ENCODE measurements at regions of chr3 and their contacts with region 1.

Region 1: GRCh38 chr3:105868742-105869530 is at the start of gene CBLB:
- DNase-seq: peak; percentile 87 to 91 (median 89)
- H3K4me3 ChIP-seq: peak within 1 kb of the TSS; percentile 93
- H3K4me3 Mint-ChIP-seq: peak within 1 kb of the TSS; percentile 95 to 100 (median 99)
- H3K27ac ChIP-seq: peak within 1 kb of the TSS; percentile 84
- H3K27ac Mint-ChIP-seq: peak within 1 kb of the TSS; percentile 87 to 100 (median 99)
- H3K4me1 ChIP-seq: peaks cover 44% of the 10 kb centered on the region
- H3K4me1 Mint-ChIP-seq: peaks cover 35 to 61% (median 47%) of the 10 kb centered on the region in 4 donors
- H3K27me3 ChIP-seq: no peaks in the 10 kb centered on the region
- H3K27me3 Mint-ChIP-seq: no peaks in the 10 kb centered on the region
- total RNA-seq, gene CBLB: 93.5 to 106 TPM

Region 2: GRCh38 chr3:105369500-105370371 is 499.2 kb before region 1 on chr3:
- CTCF ChIA-PET with region 1: no interaction called
- POLR2A ChIA-PET with region 1: interaction called, 6 read pairs
- intact Hi-C with region 1: loop called (anchors 1 kb)
- DNase-seq: peak; percentile 60 to 68 (median 63)
- H3K4me3 ChIP-seq: peak overlapping the region; percentile 67 to 80
- H3K4me3 Mint-ChIP-seq: peak overlapping the region; percentile 91 to 97 (median 96)
- H3K27ac ChIP-seq: peak overlapping the region; percentile 83
- H3K27ac Mint-ChIP-seq: peak overlapping the region; percentile 97 to 99 (median 99)
- H3K4me1 ChIP-seq: peaks cover 21% of the 10 kb centered on the region
- H3K4me1 Mint-ChIP-seq: peaks cover 13 to 45% (median 26%) of the 10 kb centered on the region in 4 donors
- H3K27me3 ChIP-seq: no peaks in the 10 kb centered on the region
- H3K27me3 Mint-ChIP-seq: peaks cover 2 to 14% of the 10 kb centered on the region in 2 donors

Region 3: DNA sequence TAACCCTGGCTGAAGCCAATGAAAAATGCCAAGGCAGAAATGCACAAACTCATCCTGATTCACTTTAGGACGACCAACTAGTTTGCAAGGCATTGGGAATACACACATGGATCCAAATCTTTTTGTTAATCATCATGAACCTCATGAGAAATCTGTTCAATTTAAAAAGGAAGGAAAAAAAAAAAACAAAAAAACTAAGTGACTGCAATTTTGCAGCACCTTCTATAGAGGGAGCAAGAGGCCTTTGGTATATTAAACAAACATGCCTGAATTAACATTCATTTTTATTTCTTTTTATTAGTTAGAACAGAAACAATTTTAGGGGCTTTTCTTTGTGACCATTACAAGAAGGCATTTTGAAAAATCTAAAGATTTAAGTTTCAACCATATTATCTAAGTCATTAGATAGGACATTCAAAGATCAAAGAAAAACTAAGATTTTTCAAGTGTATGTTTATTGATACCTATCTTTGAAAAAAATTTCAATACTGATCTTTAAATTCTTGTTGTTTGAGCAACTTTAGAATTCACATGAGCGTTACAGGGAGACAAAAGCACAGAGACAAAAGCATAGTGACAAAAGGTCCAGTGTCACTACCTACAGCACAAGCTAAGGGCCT is 182.5 kb before region 1 on chr3:
- CTCF ChIA-PET with region 1: no interaction called
- POLR2A ChIA-PET with region 1: interaction called, 3 read pairs
- intact Hi-C with region 1: loop called (anchors 2 kb)
- DNase-seq: peak in 4 of 5 donors; percentile 51 to 56 (median 52)
- H3K4me3 ChIP-seq: no peak overlapping the region
- H3K4me3 Mint-ChIP-seq: no peak overlapping the region
- H3K27ac ChIP-seq: no peak overlapping the region
- H3K27ac Mint-ChIP-seq: peak overlapping the region in 4 of 7 donors; percentile 31 to 79 (median 61)
- H3K4me1 ChIP-seq: peaks cover 18% of the 10 kb centered on the region
- H3K4me1 Mint-ChIP-seq: peaks cover 21 to 28% (median 23%) of the 10 kb centered on the region in 4 donors
- H3K27me3 ChIP-seq: no peaks in the 10 kb centered on the region
- H3K27me3 Mint-ChIP-seq: no peaks in the 10 kb centered on the region

Region 4: DNA sequence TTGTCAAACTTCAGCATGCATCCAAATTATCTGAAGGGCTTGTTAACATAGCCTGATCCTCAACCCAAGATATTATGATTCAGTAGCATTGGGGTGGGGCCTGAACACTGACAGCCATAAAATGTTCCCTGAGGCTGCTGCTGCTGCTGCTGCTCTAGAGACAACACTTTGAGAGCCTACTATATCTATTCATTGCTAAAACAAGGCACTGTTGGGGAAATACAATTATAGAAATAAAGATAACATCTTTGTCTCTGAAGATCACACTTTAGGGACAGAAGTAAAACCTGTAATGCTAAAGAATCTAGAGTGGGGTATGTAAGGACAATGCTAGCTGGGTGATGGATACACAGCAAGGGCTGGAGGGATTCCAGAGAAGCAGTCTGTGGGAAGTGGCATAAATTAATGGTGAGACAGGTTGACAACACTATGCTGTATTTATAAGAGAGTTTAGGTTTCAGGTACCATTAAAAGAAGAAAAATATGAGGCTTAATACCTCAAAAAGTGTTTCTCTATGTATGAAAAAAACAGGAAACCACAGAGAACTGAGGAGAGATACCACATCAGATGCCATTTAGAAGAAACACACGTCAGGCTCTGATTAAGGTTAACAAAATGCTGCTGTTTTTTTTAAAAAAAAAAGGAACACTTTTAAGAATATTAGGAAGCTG is 116.1 kb before region 1 on chr3:
- CTCF ChIA-PET with region 1: interaction called, 3 read pairs
- POLR2A ChIA-PET with region 1: interaction called, 16 read pairs
- intact Hi-C with region 1: loop called (anchors 1 kb)
- DNase-seq: peak; percentile 76 to 87 (median 82)
- H3K4me3 ChIP-seq: peak overlapping the region in 1 of 2 donors; percentile 28
- H3K4me3 Mint-ChIP-seq: peak overlapping the region; percentile 64 to 83 (median 76)
- H3K27ac ChIP-seq: peak overlapping the region; percentile 43
- H3K27ac Mint-ChIP-seq: peak overlapping the region; percentile 89 to 99 (median 96)
- H3K4me1 ChIP-seq: peaks cover 95% of the 10 kb centered on the region
- H3K4me1 Mint-ChIP-seq: peaks cover 52 to 88% (median 66%) of the 10 kb centered on the region in 4 donors
- H3K27me3 ChIP-seq: no peaks in the 10 kb centered on the region
- H3K27me3 Mint-ChIP-seq: no peaks in the 10 kb centered on the region

Region 5: DNA sequence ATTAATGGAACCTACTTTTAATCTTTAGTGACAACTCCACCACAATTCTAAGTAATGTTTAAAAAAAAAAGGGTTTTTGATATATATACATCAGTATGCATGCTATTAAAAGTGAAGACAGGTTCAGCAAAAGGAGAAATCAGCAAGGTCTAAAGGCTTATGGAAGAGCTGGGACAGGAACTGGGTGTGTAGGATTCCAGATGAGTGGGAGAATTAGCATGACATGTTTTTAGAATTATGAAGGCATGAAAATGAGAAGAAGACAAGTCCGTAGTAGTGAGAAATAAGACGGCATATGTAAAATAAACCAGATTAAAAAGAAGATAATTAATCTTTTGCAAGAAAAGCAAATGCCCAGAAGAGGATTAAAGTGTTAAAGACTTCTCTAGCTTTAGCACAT is 52.1 kb before region 1 on chr3:
- CTCF ChIA-PET with region 1: no interaction called
- POLR2A ChIA-PET with region 1: no interaction called
- intact Hi-C with region 1: no loop called
- DNase-seq: no peak
- H3K4me3 ChIP-seq: no peak overlapping the region
- H3K4me3 Mint-ChIP-seq: no peak overlapping the region
- H3K27ac ChIP-seq: no peak overlapping the region
- H3K27ac Mint-ChIP-seq: peak overlapping the region in 1 of 7 donors; percentile 33
- H3K4me1 ChIP-seq: no peaks in the 10 kb centered on the region
- H3K4me1 Mint-ChIP-seq: peaks cover 37 to 65% (median 47%) of the 10 kb centered on the region in 4 donors
- H3K27me3 ChIP-seq: no peaks in the 10 kb centered on the region
- H3K27me3 Mint-ChIP-seq: no peaks in the 10 kb centered on the region

Region 6: DNA sequence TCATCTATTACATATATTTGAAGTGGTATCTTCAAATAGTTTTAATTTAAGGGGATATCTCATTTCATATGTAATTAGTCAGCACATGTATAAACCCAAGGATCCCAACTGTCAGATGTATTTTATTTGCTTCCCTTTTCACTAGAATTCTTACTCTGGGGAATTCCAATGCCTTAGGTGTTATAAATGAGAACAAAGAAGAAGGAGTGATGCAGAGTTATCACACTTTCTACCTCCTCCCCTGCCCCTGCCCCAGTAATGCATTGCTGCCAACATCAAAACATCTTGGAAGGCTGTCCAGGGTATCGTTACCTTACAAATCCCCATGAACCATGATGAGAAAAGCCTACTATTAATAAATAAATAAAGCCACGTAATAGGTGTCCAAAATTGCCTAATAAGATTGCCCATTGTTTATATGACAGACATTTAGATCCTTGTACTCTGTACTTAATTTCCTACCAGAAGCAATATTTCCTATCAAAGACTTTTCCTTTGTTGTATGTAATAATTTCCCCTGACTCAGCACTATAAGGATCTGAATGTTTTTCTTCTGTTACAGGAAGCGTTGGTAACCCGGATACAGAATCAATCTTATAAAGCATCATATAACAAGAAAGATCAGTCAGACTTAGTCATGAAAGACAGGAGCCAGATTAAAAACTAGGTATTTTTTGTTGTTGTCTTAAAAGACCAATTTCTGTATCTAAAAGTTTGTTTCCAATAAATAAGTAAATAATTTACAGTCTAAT is 38.9 kb before region 1 on chr3:
- CTCF ChIA-PET with region 1: no interaction called
- POLR2A ChIA-PET with region 1: interaction called, 30 read pairs
- intact Hi-C with region 1: loop called (anchors 2 kb)
- DNase-seq: peak; percentile 46 to 71 (median 49)
- H3K4me3 ChIP-seq: no peak overlapping the region
- H3K4me3 Mint-ChIP-seq: peak overlapping the region in 6 of 8 donors; percentile 11 to 64 (median 42)
- H3K27ac ChIP-seq: no peak overlapping the region
- H3K27ac Mint-ChIP-seq: peak overlapping the region; percentile 58 to 94 (median 86)
- H3K4me1 ChIP-seq: peaks cover 73% of the 10 kb centered on the region
- H3K4me1 Mint-ChIP-seq: peaks cover 58 to 80% (median 69%) of the 10 kb centered on the region in 4 donors
- H3K27me3 ChIP-seq: no peaks in the 10 kb centered on the region
- H3K27me3 Mint-ChIP-seq: no peaks in the 10 kb centered on the region

Region 7: DNA sequence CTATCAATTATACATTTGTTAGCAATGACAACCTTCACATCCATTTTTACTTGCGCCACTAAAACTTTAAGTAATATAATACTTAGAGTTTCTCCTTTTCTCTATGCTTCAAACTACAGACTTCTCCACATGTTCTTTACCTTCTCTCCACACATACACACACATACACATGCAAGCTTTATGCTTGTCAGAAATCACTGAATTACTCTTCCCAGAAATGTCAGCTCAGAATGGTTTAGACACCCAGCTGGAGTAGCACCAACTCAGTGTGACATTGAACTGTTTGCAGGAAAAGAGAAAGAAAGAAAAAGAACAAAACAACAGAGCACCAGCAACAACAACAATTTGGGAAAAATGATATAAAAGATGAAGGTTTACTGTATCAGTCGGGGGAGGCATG is 21.1 kb before region 1 on chr3:
- CTCF ChIA-PET with region 1: interaction called, 5 read pairs
- POLR2A ChIA-PET with region 1: interaction called, 6 read pairs
- intact Hi-C with region 1: loop called (anchors 2 kb)
- DNase-seq: no peak
- H3K4me3 ChIP-seq: no peak overlapping the region
- H3K4me3 Mint-ChIP-seq: peak overlapping the region in 4 of 8 donors; percentile 12 to 77 (median 37)
- H3K27ac ChIP-seq: no peak overlapping the region
- H3K27ac Mint-ChIP-seq: peak overlapping the region in 6 of 7 donors; percentile 8 to 62 (median 25)
- H3K4me1 ChIP-seq: peaks cover 56% of the 10 kb centered on the region
- H3K4me1 Mint-ChIP-seq: peaks cover 43 to 64% (median 52%) of the 10 kb centered on the region in 4 donors
- H3K27me3 ChIP-seq: no peaks in the 10 kb centered on the region
- H3K27me3 Mint-ChIP-seq: no peaks in the 10 kb centered on the region

Region 8: DNA sequence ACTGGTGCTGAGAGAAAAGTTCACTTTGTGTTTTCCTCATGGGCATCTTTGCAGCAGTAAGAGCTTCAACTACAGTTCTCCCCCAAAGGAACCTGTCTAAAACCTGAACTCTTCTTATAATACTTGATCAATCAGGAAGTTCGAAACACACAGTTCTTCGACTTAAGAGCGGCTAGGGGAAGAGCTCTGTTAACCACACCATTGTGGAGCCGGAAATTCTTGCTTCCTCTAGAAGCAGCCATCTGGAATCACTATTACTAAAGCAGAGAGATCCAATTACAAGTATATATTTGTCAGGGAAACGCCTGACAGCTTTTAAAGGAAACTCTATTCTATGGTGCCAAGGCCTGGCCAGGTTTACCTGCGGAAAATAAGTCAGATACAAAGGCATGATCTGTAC is 337.2 kb after region 1 on chr3:
- CTCF ChIA-PET with region 1: no interaction called
- POLR2A ChIA-PET with region 1: interaction called, 6 read pairs
- intact Hi-C with region 1: loop called (anchors 5 kb)
- DNase-seq: peak; percentile 21 to 43 (median 30)
- H3K4me3 ChIP-seq: peak overlapping the region in 1 of 2 donors; percentile 2
- H3K4me3 Mint-ChIP-seq: peak overlapping the region; percentile 31 to 84 (median 77)
- H3K27ac ChIP-seq: no peak overlapping the region
- H3K27ac Mint-ChIP-seq: peak overlapping the region; percentile 59 to 88 (median 81)
- H3K4me1 ChIP-seq: peaks cover 28% of the 10 kb centered on the region
- H3K4me1 Mint-ChIP-seq: peaks cover 24 to 38% (median 27%) of the 10 kb centered on the region in 4 donors
- H3K27me3 ChIP-seq: no peaks in the 10 kb centered on the region
- H3K27me3 Mint-ChIP-seq: no peaks in the 10 kb centered on the region